ENCODE measurements at regions of chr4 and their contacts with region 1.

Region 1: GRCh38 chr4:3346146-3346545 is 53.3 kb downstream of the RGS12 start:
- DNase-seq: peak; percentile 38
- H3K4me3 ChIP-seq: no peak overlapping the region
- CTCF ChIP-seq: peak; percentile 64

Region 2: GRCh38 chr4:3328814-3329663 is 17.1 kb before region 1 on chr4:
- CTCF ChIA-PET with region 1: interaction called, 13 read pairs
- POLR2A ChIA-PET with region 1: no interaction called
- DNase-seq: no peak
- H3K4me3 ChIP-seq: no peak overlapping the region
- CTCF ChIP-seq: no peak

Region 3: DNA sequence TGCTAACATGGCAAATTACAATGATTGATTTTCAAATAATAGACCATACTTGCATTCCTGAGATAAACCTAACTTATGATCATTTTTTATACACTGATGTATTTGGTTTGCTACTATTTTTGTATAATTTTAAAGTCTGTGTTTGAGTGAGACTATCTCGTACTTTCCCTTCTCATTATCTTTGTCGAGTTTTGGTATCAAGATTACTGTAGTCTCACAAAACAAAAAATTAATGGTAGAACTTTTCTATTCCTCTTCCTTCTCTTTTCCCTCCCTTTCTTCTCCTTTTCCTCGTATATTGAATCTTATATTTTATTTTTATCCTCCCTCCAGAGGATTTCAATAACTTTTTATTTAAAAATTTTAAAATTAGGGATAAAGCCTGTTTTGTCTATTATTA is 11.8 kb before region 1 on chr4:
- CTCF ChIA-PET with region 1: interaction called, 13 read pairs
- POLR2A ChIA-PET with region 1: no interaction called
- DNase-seq: no peak
- H3K4me3 ChIP-seq: no peak overlapping the region
- CTCF ChIP-seq: no peak

Region 4: DNA sequence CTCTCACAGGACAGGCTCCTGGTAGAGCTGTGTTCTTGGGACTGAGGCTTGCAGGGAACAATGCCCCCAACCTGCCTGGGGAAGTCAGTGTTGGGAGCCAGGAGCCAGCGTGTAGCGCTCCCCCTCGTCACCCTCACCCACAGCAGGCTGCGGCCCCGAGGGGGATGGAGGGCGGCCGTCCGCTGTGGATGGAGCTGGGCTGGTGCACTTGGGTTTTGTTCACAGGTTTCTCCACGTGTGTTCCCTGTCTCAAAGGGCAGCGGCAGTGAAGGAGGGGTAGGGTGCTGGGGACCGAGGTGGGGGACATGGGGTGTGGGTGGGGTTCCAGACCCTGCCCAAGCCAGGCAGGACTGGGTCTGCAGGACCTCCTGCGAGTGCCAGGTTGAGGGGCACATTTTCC is 15.8 kb after region 1 on chr4:
- CTCF ChIA-PET with region 1: interaction called, 43 read pairs
- POLR2A ChIA-PET with region 1: no interaction called
- DNase-seq: no peak
- H3K4me3 ChIP-seq: no peak overlapping the region
- CTCF ChIP-seq: no peak

Region 5: DNA sequence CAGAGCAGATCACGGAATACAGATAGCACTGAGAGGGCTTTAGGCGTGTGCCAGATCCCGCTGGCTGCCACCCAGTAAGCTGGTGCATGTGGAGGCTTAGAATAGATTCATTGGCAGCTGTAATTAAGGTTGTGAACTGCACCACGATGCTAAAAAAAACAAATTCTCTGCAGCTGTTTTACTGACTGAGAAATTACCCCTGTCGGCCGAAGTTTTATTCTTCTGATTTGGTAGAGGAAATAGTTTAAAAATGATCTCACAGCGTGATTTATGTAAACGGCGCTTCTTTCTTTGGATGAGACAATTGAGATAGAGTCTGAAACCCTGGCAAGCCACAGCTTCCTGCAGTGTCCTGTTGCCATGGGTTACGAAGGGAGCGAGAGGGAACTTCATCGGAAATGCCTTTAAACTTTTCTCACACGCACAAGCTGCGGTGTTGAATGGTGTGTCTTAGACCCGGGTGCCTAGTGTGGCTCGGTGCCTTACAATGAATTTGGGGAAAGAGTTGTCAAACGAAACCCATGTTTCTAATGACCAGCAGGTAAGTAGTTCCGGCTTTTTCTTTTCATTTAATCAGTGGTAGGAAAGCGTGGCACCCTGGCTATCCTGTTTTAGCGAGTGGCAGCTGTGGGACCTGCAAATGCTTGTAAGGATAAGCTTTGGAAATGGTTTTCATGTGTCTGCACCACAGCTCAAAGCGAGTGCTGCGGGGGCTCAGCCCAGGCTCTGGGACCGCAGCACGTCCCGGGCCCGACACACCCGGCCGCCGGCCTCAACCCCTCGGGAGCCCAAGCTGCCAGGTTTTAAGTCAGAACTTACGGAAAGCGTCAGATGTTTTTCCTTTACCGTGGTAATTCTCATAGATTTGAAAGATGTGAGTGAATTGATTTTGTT is 23.9 kb after region 1 on chr4:
- CTCF ChIA-PET with region 1: interaction called, 23 read pairs
- POLR2A ChIA-PET with region 1: no interaction called
- DNase-seq: peak; percentile 70
- H3K4me3 ChIP-seq: peak overlapping the region; percentile 49
- CTCF ChIP-seq: no peak

Region 6: GRCh38 chr4:3442959-3443749 is 97.0 kb after region 1 on chr4:
- CTCF ChIA-PET with region 1: interaction called, 309 read pairs
- POLR2A ChIA-PET with region 1: no interaction called
- DNase-seq: no peak
- H3K4me3 ChIP-seq: no peak overlapping the region
- CTCF ChIP-seq: peak; percentile 100

Region 7: DNA sequence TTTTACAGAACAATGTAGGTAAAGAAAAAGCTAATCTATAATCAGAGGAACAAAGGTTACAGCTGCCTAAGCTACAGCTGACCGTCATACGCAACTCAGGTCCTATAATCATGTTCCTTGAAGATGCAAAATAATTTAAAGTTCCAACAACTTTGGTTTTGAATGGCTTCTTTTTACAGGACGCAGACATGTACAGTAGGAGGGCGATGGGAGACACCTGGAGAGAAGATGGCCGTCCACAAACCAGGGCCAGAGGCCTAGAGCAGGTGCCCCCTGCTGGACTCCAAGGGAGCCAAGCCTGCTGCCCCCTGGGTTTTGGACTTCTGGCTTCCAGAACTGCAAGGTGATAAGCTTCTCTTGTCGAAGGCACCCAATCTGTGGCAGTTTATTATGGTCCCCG is 106.2 kb after region 1 on chr4:
- CTCF ChIA-PET with region 1: interaction called, 309 read pairs
- POLR2A ChIA-PET with region 1: no interaction called
- DNase-seq: no peak
- H3K4me3 ChIP-seq: no peak overlapping the region
- CTCF ChIP-seq: peak; percentile 26

Region 8: DNA sequence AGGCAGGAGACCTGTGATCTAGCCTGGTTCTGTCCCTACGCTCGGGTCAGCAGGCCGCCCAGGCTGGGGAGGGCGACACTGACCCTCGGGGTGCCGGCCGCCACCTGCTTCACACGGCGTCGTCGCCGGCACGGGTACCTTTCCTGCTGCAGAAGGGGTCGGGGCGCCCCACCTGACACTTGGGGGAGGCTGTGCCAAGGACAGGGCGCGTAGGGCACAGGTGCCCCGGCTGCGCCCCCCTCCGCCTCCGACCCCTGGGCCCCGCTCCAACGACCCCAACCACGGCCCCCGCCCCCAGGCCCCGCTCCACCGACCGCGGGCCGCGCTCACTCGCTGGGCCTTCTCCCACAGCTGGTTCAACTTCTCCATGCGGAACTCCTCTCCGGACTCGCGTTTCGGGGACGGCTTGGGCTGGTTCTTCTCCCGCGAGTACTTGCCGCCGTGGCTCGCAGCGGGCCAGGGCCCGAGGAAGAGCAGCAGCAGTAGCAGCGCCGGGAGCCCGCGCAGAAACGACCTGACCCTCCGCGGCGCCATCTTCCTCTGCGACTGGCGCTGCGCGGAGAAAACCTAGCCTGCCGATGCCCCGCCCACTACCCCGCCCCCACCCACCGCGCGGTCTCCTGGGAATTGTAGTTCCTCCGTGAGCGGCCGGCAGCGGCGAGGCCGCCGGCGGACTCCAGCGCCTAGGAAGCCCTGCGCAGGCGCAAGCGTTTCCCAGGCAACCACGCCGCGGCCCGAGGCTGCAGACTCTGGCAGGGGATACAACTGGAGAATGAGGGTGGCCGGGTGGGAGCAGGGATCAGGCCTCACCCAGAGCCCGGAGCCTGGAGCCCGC is 185.9 kb after region 1 on chr4 and contains the start of gene LRPAP1:
- CTCF ChIA-PET with region 1: no interaction called
- POLR2A ChIA-PET with region 1: no interaction called
- DNase-seq: peak; percentile 23
- H3K4me3 ChIP-seq: peak within 1 kb of the TSS; percentile 92
- CTCF ChIP-seq: no peak